Activated B cell treated with CpG ODN at 0.5 μM for 24 hours (primary cell): ENCODE measurements at regions of chr12 and their contacts with region 1.

Region 1: GRCh38 chr12:121060149-121061001 is 21.3 kb upstream of the OASL start:
- DNase-seq: peak; percentile 26
- ATAC-seq: peak; percentile 94
- H3K4me3 Mint-ChIP-seq: peak overlapping the region; percentile 83
- H3K27ac Mint-ChIP-seq: peak overlapping the region; percentile 82
- H3K4me1 Mint-ChIP-seq: peaks cover 11% of the 10 kb centered on the region
- H3K27me3 Mint-ChIP-seq: no peaks in the 10 kb centered on the region
- CTCF ChIP-seq: peak; percentile 44

Region 2: GRCh38 chr12:120327593-120327992 is 732.8 kb before region 1 on chr12 and contains the start of gene PLA2G1B:
- CTCF ChIA-PET with region 1: no interaction called
- POLR2A ChIA-PET with region 1: no interaction called
- intact Hi-C with region 1: no loop called
- DNase-seq: no peak
- ATAC-seq: no peak
- H3K4me3 Mint-ChIP-seq: no peak within 1 kb of the TSS
- H3K27ac Mint-ChIP-seq: no peak within 1 kb of the TSS
- H3K4me1 Mint-ChIP-seq: peaks cover 7% of the 10 kb centered on the region
- H3K27me3 Mint-ChIP-seq: peaks cover 10% of the 10 kb centered on the region
- CTCF ChIP-seq: no peak
- total RNA-seq, gene PLA2G1B: not detected in 2 replicates

Region 3: GRCh38 chr12:121015825-121016766 is 44.3 kb before region 1 on chr12 and contains the start of gene C12orf43:
- CTCF ChIA-PET with region 1: interaction called, 5 read pairs
- POLR2A ChIA-PET with region 1: no interaction called
- intact Hi-C with region 1: loop called (anchors 1 kb)
- DNase-seq: peak; percentile 80
- ATAC-seq: peak; percentile 98
- H3K4me3 Mint-ChIP-seq: peak within 1 kb of the TSS; percentile 100
- H3K27ac Mint-ChIP-seq: peak within 1 kb of the TSS; percentile 97
- H3K4me1 Mint-ChIP-seq: peaks cover 16% of the 10 kb centered on the region
- H3K27me3 Mint-ChIP-seq: no peaks in the 10 kb centered on the region
- CTCF ChIP-seq: no peak
- total RNA-seq, gene C12orf43: 23.7 and 24.8 TPM in 2 replicates

Region 4: DNA sequence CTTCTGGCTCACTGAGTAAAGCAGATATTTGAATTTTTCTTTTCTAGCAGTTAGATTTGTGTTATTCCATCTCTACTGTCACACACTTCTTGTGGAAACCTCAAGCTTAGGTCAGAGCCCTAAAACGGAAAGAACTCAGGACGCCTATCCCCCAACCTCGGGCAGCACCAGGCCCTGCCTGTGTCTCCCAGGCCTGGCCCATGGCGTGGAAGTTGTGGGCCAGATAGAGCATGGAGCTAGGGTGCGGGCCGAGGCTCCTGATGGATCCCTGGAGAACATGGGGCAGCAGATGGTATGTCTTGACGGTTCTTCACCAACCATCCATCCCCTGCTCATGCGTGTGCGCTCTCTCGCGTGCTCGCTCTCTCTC is 170.1 kb after region 1 on chr12:
- CTCF ChIA-PET with region 1: interaction called, 6 read pairs
- POLR2A ChIA-PET with region 1: no interaction called
- intact Hi-C with region 1: loop called (anchors 1 kb)
- DNase-seq: no peak
- ATAC-seq: no peak
- H3K4me3 Mint-ChIP-seq: no peak overlapping the region
- H3K27ac Mint-ChIP-seq: no peak overlapping the region
- H3K4me1 Mint-ChIP-seq: peaks cover 16% of the 10 kb centered on the region
- H3K27me3 Mint-ChIP-seq: no peaks in the 10 kb centered on the region
- CTCF ChIP-seq: no peak